A549 (cell line): ENCODE measurements at regions of chr15 and their contacts with region 1.

Region 1: GRCh38 chr15:91302588-91303439 is 202.8 kb downstream of the SV2B start:
- DNase-seq: peak; percentile 71 to 80
- ATAC-seq: peak; percentile 75 to 95; a peak in 5 of 6 replicates
- H3K4me3 ChIP-seq: no peak overlapping the region
- H3K27ac ChIP-seq: no peak overlapping the region
- H3K4me1 ChIP-seq: no peaks in the 10 kb centered on the region
- CTCF ChIP-seq: peak; percentile 94
- EP300 ChIP-seq: no peak
- POLR2A ChIP-seq: no peak
- RAD21 ChIP-seq: peak; percentile 95 to 96

Region 2: GRCh38 chr15:91289324-91289723 is 13.5 kb before region 1 on chr15:
- CTCF ChIA-PET with region 1: interaction called, 23 read pairs
- POLR2A ChIA-PET with region 1: no interaction called
- DNase-seq: peak in 1 of 2 experiments; percentile 7
- ATAC-seq: peak in 1 of 2 experiments; percentile 48; a peak in 3 of 6 replicates
- H3K4me3 ChIP-seq: no peak overlapping the region
- H3K27ac ChIP-seq: no peak overlapping the region
- H3K4me1 ChIP-seq: no peaks in the 10 kb centered on the region
- CTCF ChIP-seq: no peak
- EP300 ChIP-seq: no peak
- POLR2A ChIP-seq: no peak
- RAD21 ChIP-seq: no peak

Region 3: DNA sequence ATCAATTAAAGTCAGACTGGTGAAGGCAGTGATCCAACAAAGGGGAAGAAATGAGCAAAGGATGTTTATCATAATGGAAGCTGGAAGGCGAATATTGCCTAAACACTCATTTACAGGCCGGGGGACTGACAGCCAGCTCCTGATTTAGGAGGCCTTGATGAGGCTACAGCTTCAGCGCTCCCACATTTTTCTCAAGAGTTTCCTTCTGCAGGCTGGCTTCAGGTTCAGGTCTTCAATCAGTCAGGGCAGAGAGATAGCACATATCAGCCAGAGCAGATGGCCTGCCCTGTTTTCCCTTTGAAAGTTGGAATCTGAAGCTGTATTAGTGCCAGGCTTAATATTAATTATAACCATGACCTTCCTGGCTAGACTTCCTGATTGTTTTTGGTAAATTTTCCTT is 16.1 kb after region 1 on chr15:
- CTCF ChIA-PET with region 1: interaction called, 21 read pairs
- POLR2A ChIA-PET with region 1: no interaction called
- DNase-seq: no peak
- ATAC-seq: no peak
- H3K4me3 ChIP-seq: no peak overlapping the region
- H3K27ac ChIP-seq: no peak overlapping the region
- H3K4me1 ChIP-seq: no peaks in the 10 kb centered on the region
- CTCF ChIP-seq: no peak
- EP300 ChIP-seq: no peak
- POLR2A ChIP-seq: no peak
- RAD21 ChIP-seq: no peak

Region 4: DNA sequence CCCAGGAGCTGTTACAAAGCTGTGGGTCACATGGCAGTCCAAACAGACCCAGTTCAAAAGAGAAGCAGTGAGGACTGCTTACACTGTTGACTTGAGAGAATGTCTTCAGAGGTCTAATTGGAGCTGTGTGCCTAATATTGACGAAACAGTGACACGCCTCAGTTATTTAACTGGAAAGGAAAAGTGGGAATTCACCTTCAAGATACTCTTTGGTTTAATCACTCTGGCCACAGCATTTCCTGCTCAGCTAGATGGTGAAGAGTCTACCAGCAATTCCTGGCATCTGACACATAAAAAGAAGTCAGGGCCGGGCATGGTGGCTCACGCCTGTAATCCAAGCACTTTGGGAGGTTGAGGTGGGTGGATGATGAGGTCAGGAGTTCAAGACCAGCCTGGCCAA is 123.6 kb after region 1 on chr15:
- CTCF ChIA-PET with region 1: no interaction called
- POLR2A ChIA-PET with region 1: no interaction called
- DNase-seq: no peak
- ATAC-seq: no peak
- H3K4me3 ChIP-seq: no peak overlapping the region
- H3K27ac ChIP-seq: no peak overlapping the region
- H3K4me1 ChIP-seq: no peaks in the 10 kb centered on the region
- CTCF ChIP-seq: no peak
- EP300 ChIP-seq: no peak
- POLR2A ChIP-seq: no peak
- RAD21 ChIP-seq: no peak

Region 5: GRCh38 chr15:91482795-91483194 is 180.0 kb after region 1 on chr15:
- CTCF ChIA-PET with region 1: no interaction called
- POLR2A ChIA-PET with region 1: no interaction called
- DNase-seq: no peak
- ATAC-seq: no peak
- H3K4me3 ChIP-seq: no peak overlapping the region
- H3K27ac ChIP-seq: no peak overlapping the region
- H3K4me1 ChIP-seq: no peaks in the 10 kb centered on the region
- CTCF ChIP-seq: no peak
- EP300 ChIP-seq: no peak
- POLR2A ChIP-seq: no peak
- RAD21 ChIP-seq: no peak

Region 6: GRCh38 chr15:91522663-91523332 is 220.0 kb after region 1 on chr15:
- CTCF ChIA-PET with region 1: interaction called, 27 read pairs
- POLR2A ChIA-PET with region 1: no interaction called
- DNase-seq: peak in 1 of 2 experiments; percentile 59
- ATAC-seq: peak; percentile 60 to 77; a peak in 3 of 6 replicates
- H3K4me3 ChIP-seq: no peak overlapping the region
- H3K27ac ChIP-seq: no peak overlapping the region
- H3K4me1 ChIP-seq: peaks cover 9% of the 10 kb centered on the region; the same call in 2 of the 3 replicates
- CTCF ChIP-seq: peak; percentile 65
- EP300 ChIP-seq: no peak
- POLR2A ChIP-seq: no peak
- RAD21 ChIP-seq: peak; percentile 73 to 86